ENCODE measurements at regions of chr9 and their contacts with region 1.

Region 1: GRCh38 chr9:69283003-69283402 is 42.0 kb upstream of the ENTREP1 start:
- DNase-seq: no peak
- H3K4me3 ChIP-seq: no peak overlapping the region
- H3K27ac ChIP-seq: no peak overlapping the region
- H3K4me1 ChIP-seq: no peaks in the 10 kb centered on the region
- H3K27me3 ChIP-seq: no peaks in the 10 kb centered on the region
- CTCF ChIP-seq: no peak

Region 2: GRCh38 chr9:69295872-69296552 is 13.0 kb after region 1 on chr9:
- CTCF ChIA-PET with region 1: interaction called, 10 read pairs
- POLR2A ChIA-PET with region 1: no interaction called
- intact Hi-C with region 1: no loop called
- DNase-seq: no peak
- H3K4me3 ChIP-seq: no peak overlapping the region
- H3K27ac ChIP-seq: no peak overlapping the region
- H3K4me1 ChIP-seq: no peaks in the 10 kb centered on the region; the same call in 1 of the 2 replicates
- H3K27me3 ChIP-seq: no peaks in the 10 kb centered on the region; the same call in 1 of the 2 replicates
- CTCF ChIP-seq: no peak

Measured in PC-9 (cell line).